Calu3 (cell line): ENCODE measurements at regions of chr12 and their contacts with region 1.

Region 1: DNA sequence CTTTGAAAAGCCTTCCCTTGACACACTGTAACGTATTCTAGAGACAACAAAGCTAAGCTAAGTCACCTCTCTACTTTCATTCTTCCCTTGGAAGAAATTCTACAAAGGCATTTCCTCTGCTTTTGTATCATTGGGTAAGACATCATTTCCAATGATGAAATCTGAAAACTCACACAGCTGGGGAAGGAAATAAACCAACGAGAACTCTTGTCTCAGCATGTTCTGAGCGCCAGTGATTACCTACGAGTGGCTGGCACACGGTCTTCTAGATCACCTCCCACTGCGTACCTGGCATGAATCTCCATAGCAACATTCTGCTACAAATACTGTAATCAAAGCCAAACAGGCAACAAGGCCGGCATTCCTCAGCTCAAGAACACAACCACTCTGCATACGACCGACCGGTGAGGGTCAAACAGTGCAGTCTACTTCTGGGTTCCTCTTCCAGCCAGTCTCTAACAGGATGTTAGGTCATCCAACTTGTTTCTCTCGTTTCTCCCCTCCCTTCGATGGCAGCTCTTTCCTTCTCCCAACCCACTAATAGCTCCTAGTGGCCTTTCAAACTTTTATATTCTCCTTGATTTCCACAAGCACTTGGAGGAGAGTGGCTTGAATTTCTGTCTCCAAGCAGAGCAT is 7.6 kb downstream of the VPS37B start:
- DNase-seq: peak; percentile 91
- H3K4me3 Mint-ChIP-seq: peak overlapping the region; percentile 100
- H3K27ac Mint-ChIP-seq: peak overlapping the region; percentile 98
- H3K4me1 Mint-ChIP-seq: peaks cover 81% of the 10 kb centered on the region
- H3K27me3 Mint-ChIP-seq: no peaks in the 10 kb centered on the region
- CTCF ChIP-seq: no peak

Region 2: DNA sequence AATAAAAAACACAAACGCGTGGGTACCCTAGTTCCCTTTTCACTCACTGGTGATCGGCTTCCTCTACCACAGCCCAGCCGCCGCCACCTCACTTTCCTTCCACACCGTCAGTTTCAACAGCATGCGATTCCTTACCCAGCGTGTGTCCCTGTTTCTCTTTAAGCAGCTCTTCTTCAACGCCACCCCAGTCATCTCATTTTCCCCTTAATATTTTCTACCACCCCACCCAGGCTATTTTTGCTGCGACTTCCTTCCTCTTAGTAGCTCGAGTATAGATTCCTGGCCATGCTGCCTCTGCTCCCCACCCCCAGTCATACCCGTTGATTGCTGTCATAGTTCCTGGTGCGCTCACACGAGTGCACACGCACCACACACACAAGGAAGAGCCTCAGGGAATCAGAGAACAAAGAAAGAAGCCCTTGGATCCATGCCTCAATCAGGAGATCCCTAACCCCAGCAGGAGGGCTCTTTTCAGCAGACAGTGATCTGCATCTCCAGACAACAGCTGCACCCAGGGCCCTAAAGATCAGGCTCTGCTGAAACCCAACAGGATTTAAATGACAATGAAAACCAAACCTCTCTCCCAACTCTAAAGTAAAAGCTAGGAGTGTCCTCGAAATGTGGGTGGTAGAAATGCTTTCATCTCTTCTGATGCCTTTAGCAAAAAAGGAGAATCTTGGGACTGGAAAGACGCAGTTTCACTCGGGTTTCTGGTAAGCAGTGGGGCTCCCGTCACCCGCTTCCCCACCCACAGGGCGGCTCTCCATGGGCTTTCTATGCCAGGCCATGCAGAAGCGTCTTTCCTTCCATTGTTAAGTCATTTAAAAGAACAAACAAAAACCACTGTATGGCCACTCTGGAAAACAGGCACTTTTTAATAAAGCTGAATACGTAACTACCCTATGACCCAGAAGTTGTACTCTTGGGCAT is 16.2 kb before region 1 on chr12:
- CTCF ChIA-PET with region 1: interaction called, 16 read pairs
- intact Hi-C with region 1: loop called (anchors 2 kb)
- DNase-seq: peak; percentile 87
- H3K4me3 Mint-ChIP-seq: peak overlapping the region; percentile 64
- H3K27ac Mint-ChIP-seq: peak overlapping the region; percentile 91
- H3K4me1 Mint-ChIP-seq: peaks cover 50% of the 10 kb centered on the region
- H3K27me3 Mint-ChIP-seq: no peaks in the 10 kb centered on the region
- CTCF ChIP-seq: no peak

Region 3: GRCh38 chr12:122935318-122935717 is 47.0 kb after region 1 on chr12:
- CTCF ChIA-PET with region 1: interaction called, 10 read pairs
- intact Hi-C with region 1: no loop called
- DNase-seq: no peak
- H3K4me3 Mint-ChIP-seq: no peak overlapping the region
- H3K27ac Mint-ChIP-seq: no peak overlapping the region
- H3K4me1 Mint-ChIP-seq: peaks cover 8% of the 10 kb centered on the region
- H3K27me3 Mint-ChIP-seq: no peaks in the 10 kb centered on the region
- CTCF ChIP-seq: no peak

Region 4: DNA sequence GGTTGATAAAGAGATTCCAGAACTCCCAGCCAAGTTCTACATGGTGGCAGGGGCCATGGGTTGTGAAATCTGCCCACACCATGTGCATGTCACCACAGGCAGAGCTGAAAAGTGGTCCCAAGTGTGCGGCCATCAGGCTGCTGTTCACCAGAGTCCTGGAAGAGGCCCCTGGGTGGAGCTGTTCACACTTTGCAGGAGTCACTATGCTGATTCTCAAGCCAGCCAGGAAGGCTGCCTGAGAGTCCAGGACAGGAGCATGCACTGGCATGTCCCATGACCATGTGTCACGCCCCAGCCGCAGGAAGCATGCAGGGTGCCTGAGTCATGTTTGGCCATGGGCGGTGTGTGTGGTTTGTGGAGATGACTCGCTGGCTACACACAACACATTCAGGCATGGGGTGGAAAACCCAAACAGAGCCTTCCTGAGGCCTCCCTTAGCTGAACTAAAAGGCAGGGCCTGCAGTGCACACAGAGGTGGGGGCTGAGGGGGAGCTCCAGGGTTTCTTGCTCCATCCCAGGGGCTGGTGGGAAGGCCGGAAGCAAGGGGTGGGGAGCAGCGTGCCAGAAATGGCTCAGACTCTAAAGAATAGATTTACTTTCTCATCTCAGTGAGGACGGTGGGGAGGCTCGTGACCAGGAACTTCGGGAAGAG is 58.5 kb after region 1 on chr12:
- CTCF ChIA-PET with region 1: interaction called, 17 read pairs
- intact Hi-C with region 1: loop called (anchors 2 kb)
- DNase-seq: peak; percentile 96
- H3K4me3 Mint-ChIP-seq: peak overlapping the region; percentile 47
- H3K27ac Mint-ChIP-seq: peak overlapping the region; percentile 93
- H3K4me1 Mint-ChIP-seq: peaks cover 81% of the 10 kb centered on the region
- H3K27me3 Mint-ChIP-seq: no peaks in the 10 kb centered on the region
- CTCF ChIP-seq: peak; percentile 43

Region 5: GRCh38 chr12:123421314-123421713 is 533.0 kb after region 1 on chr12:
- CTCF ChIA-PET with region 1: no interaction called
- intact Hi-C with region 1: no loop called
- DNase-seq: no peak
- H3K4me3 Mint-ChIP-seq: no peak overlapping the region
- H3K27ac Mint-ChIP-seq: no peak overlapping the region
- H3K4me1 Mint-ChIP-seq: no peaks in the 10 kb centered on the region
- H3K27me3 Mint-ChIP-seq: no peaks in the 10 kb centered on the region
- CTCF ChIP-seq: no peak